Heart left ventricle (tissue), 16 donors: ENCODE measurements at regions of chr17 and their contacts with region 1.

Region 1: DNA sequence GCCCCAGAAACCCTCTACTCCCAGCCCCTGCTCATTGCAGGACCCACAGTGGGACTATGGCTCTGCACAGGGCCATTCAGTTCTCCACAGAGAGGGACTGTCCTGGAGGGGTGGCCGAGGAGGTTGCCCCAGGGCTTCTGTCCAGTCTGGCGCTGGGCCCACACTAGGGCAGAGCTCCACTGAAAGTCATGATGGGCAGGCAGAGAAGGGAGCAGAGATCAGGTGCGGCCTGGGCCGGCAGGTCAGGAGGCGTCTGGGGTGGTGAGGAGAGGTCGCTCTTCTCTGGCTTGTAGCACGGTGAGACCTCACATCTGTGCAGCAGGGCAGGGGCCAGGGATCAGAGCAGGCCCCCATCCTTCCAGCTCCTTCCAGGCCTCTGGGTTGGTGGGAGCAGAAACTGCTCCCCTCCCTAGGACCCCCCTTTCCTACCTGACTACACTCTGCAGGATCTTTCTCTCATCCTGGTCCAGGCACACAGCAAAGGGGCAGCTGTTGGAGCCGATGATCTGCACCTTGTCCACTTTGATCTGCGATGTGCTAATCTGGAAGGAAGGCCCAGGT is 13.1 kb upstream of the PIK3R6 start:
- DNase-seq: no peak
- ATAC-seq: peak in 1 of 4 donors; percentile 35
- H3K4me3 ChIP-seq: no peak overlapping the region
- H3K27ac ChIP-seq: no peak overlapping the region
- H3K4me1 ChIP-seq: no peaks in the 10 kb centered on the region
- H3K27me3 ChIP-seq: peaks cover 0 to 8% (median 0%) of the 10 kb centered on the region in 9 donors
- CTCF ChIP-seq: no peak
- POLR2A ChIP-seq: no peak

Region 2: GRCh38 chr17:8806926-8807550 is 73.5 kb before region 1 on chr17:
- intact Hi-C with region 1: loop called in 1 of 10 experiments (anchors 5 kb)
- DNase-seq: no peak
- ATAC-seq: peak in 2 of 4 donors; percentile 38 to 47
- H3K4me3 ChIP-seq: no peak overlapping the region
- H3K27ac ChIP-seq: peak overlapping the region in 2 of 12 donors; percentile 23 to 81
- H3K4me1 ChIP-seq: peaks cover 0 to 16% (median 0%) of the 10 kb centered on the region in 12 donors
- H3K27me3 ChIP-seq: no peaks in the 10 kb centered on the region
- CTCF ChIP-seq: no peak
- POLR2A ChIP-seq: no peak

Region 3: DNA sequence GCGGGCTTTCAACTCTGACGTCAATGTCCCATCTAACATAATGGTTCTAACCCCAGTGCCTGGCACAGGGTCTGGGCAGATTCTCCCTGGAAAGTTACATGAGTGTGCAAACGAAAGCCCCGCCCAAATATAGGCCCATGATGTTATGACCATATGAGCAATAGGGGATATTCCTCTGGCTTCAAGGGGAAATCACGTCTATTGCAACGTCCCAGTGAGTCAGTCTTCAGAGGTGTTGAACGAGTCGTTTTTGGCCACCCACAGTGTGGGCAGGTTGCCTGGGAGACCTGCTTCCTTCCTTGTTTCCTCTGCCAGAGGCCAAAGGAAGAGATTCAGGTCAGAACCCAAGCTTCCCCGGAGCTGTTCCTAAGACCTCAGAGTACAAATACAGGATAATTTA is 54.6 kb after region 1 on chr17:
- intact Hi-C with region 1: no loop called
- DNase-seq: peak in 1 of 5 donors; percentile 29
- ATAC-seq: peak in 2 of 4 donors; percentile 44 to 49
- H3K4me3 ChIP-seq: no peak overlapping the region
- H3K27ac ChIP-seq: peak overlapping the region in 1 of 12 donors; percentile 50
- H3K4me1 ChIP-seq: peaks cover 0 to 48% (median 0%) of the 10 kb centered on the region in 12 donors
- H3K27me3 ChIP-seq: peaks cover 0 to 7% (median 0%) of the 10 kb centered on the region in 9 donors
- CTCF ChIP-seq: no peak
- POLR2A ChIP-seq: no peak

Region 4: GRCh38 chr17:9183306-9183705 is 302.8 kb after region 1 on chr17:
- intact Hi-C with region 1: no loop called
- DNase-seq: no peak
- ATAC-seq: no peak
- H3K4me3 ChIP-seq: no peak overlapping the region
- H3K27ac ChIP-seq: no peak overlapping the region
- H3K4me1 ChIP-seq: no peaks in the 10 kb centered on the region
- H3K27me3 ChIP-seq: no peaks in the 10 kb centered on the region
- CTCF ChIP-seq: no peak
- POLR2A ChIP-seq: no peak